Panc1 (cell line): ENCODE measurements at regions of chr3 and their contacts with region 1.

Region 1: DNA sequence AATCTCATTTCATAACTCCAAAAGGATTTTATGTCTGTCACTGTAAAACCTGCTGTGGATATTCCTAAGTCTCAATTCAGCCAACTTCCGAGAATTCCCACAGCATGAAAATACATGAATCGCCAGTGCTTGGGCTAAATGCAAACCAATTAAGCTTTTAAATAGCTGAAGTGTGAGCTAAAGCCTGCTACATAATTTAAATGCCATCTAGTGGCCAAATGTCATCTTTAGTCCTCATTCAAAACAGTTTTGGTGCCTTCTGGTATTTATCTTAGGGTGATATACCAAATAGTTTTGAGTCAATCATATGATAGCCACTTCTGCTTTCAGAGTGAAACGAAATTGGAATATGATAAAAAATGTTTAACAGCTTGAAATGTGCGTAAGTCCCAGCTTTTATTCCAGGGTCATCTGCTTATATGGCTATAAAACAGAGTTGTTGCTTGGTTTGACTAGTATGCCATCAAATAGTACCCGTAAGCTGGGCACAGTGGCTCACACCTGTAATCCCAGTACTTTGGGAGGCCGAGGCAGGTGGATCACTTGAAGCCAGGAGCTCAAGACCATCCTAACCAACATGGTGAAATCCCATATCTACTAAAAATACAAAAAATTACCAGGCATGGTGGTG is 41.8 kb upstream of the CCNL1 start:
- DNase-seq: peak; percentile 33
- ATAC-seq: peak; percentile 77
- H3K4me3 ChIP-seq: no peak overlapping the region
- H3K27ac ChIP-seq: no peak overlapping the region
- H3K4me1 ChIP-seq: no peaks in the 10 kb centered on the region
- H3K27me3 ChIP-seq: peaks cover 2% of the 10 kb centered on the region; the same call in 1 of the 2 replicates
- CTCF ChIP-seq: peak; percentile 77

Region 2: GRCh38 chr3:157447026-157447694 is 245.4 kb after region 1 on chr3:
- CTCF ChIA-PET with region 1: no interaction called
- POLR2A ChIA-PET with region 1: no interaction called
- in situ Hi-C with region 1: no loop called
- intact Hi-C with region 1: loop called (anchors 2 kb)
- DNase-seq: no peak
- ATAC-seq: peak; percentile 75
- H3K4me3 ChIP-seq: no peak overlapping the region
- H3K27ac ChIP-seq: no peak overlapping the region
- H3K4me1 ChIP-seq: no peaks in the 10 kb centered on the region
- H3K27me3 ChIP-seq: no peaks in the 10 kb centered on the region
- CTCF ChIP-seq: peak; percentile 69; the same call in 1 of the 2 replicates

Region 3: GRCh38 chr3:157493627-157494550 is 292.1 kb after region 1 on chr3:
- CTCF ChIA-PET with region 1: interaction called, 3 read pairs
- POLR2A ChIA-PET with region 1: no interaction called
- in situ Hi-C with region 1: no loop called
- intact Hi-C with region 1: loop called (anchors 1 kb)
- DNase-seq: peak; percentile 35
- ATAC-seq: no peak
- H3K4me3 ChIP-seq: no peak overlapping the region
- H3K27ac ChIP-seq: no peak overlapping the region
- H3K4me1 ChIP-seq: no peaks in the 10 kb centered on the region
- H3K27me3 ChIP-seq: peaks cover 5% of the 10 kb centered on the region
- CTCF ChIP-seq: peak; percentile 72; the same call in 1 of the 2 replicates

Region 4: DNA sequence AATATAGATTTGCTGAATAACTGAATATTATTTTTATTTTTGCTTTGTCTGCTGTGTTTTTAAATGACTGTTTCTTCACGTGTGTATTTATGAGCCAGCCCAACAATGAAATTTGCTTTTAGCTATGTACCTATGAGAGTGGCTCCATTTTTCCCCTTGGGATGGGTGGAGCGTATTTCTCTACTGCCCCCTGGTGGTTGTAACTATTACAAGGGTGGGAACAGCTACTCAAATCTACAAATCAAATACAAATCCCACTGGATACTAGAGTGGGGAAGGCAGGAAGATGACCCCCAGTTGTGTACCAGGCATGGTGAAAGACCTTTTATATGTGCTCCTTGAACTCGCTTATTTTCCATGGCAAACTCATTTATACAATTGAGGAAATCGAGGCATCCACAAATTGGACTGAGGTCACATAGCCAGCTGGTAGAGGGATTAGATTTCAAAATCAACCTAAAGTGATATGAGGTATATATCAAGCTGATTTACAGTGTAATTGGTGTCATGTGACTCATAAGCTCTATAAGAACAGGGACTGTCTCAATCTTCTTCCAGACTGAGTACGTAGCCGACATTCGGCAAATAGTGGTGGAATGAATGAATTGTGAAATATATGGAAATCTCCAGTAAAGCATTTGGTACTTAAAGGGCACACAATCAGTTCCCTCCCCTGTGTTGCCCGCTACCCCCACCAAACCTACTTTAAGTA is 371.0 kb after region 1 on chr3:
- CTCF ChIA-PET with region 1: no interaction called
- POLR2A ChIA-PET with region 1: no interaction called
- in situ Hi-C with region 1: no loop called
- intact Hi-C with region 1: loop called (anchors 5 kb)
- DNase-seq: peak; percentile 32
- ATAC-seq: peak; percentile 84
- H3K4me3 ChIP-seq: no peak overlapping the region
- H3K27ac ChIP-seq: no peak overlapping the region
- H3K4me1 ChIP-seq: no peaks in the 10 kb centered on the region
- H3K27me3 ChIP-seq: no peaks in the 10 kb centered on the region
- CTCF ChIP-seq: peak; percentile 89